Caco-2 (cell line): ENCODE measurements at regions of chr17 and their contacts with region 1.

Region 1: GRCh38 chr17:42720996-42721583 is 23.8 kb downstream of the EZH1 start:
- DNase-seq: peak in 1 of 2 experiments; percentile 76
- H3K4me3 ChIP-seq: no peak overlapping the region
- H3K4me3 Mint-ChIP-seq: no peak overlapping the region
- H3K27ac Mint-ChIP-seq: no peak overlapping the region
- H3K4me1 ChIP-seq: no peaks in the 10 kb centered on the region
- H3K4me1 Mint-ChIP-seq: no peaks in the 10 kb centered on the region
- H3K27me3 ChIP-seq: no peaks in the 10 kb centered on the region
- H3K27me3 Mint-ChIP-seq: no peaks in the 10 kb centered on the region
- CTCF ChIP-seq: peak; percentile 72 to 73

Region 2: DNA sequence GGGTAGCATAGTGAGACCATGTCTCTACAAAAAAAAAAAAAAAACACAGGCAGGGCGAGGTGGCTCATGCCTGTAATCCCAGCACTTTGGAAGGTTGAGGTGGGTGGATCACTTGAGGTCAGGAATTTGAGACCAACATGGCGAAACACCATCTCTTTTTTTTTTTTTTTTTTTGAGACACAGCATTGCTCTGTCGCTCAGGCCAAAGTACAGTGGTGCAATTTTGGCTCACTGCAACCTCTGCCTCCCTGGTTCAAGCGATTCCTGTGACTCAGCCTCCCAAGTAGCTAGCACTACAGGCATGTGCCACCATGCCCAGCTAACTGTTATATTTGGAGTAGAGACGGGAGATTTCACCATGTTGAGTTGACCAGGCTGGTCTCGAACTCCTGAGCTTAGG is 45.0 kb after region 1 on chr17:
- CTCF ChIA-PET with region 1: interaction called, 9 read pairs
- POLR2A ChIA-PET with region 1: interaction called, 15 read pairs
- intact Hi-C with region 1: loop called (anchors 1 kb)
- DNase-seq: peak in 1 of 2 experiments; percentile 23
- H3K4me3 ChIP-seq: no peak overlapping the region
- H3K4me3 Mint-ChIP-seq: no peak overlapping the region
- H3K27ac Mint-ChIP-seq: no peak overlapping the region
- H3K4me1 ChIP-seq: peaks cover 15% of the 10 kb centered on the region
- H3K4me1 Mint-ChIP-seq: peaks cover 13% of the 10 kb centered on the region
- H3K27me3 ChIP-seq: no peaks in the 10 kb centered on the region
- H3K27me3 Mint-ChIP-seq: no peaks in the 10 kb centered on the region
- CTCF ChIP-seq: no peak

Region 3: DNA sequence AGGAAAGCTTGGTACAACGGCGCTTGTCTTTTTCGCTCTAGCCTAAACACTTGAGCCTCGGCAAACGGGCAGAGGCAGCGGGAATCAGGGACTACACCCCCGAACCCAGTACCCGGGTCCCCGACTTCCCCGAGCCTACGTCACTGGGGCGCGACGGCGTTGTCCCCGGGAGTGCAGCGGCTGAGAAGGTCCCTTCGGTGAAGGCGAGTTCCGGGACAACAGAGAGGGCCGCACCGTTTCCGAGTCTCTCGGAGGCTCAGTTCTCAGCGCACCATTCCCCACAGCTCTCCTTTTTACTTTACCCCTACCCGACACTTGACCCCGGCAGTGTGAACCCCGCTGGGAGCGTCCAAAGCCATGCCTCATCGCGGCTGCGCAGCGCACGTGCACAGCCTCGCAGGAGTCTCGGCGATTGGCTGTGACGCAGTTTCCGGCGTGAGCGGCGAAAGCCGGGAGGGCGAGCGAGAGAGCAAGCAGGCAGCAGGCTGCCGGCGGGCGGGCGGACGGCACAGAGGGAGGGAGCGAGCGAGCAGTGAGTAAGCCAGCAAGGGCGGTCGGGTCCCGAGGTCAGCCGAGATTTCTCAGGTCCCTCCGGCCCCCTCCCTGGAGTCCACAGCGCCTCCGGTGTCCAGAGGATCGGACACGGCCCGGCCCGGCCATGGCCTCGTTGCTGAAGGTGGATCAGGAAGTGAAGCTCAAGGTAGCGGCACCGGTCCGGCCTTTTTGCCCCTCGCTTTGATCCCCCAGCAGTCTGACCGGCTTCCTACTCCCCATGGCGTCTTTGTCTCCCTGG is 112.1 kb after region 1 on chr17 and contains the start of gene PSME3:
- CTCF ChIA-PET with region 1: no interaction called
- POLR2A ChIA-PET with region 1: no interaction called
- intact Hi-C with region 1: no loop called
- DNase-seq: peak; percentile 91 to 92
- H3K4me3 ChIP-seq: peak within 1 kb of the TSS; percentile 97
- H3K4me3 Mint-ChIP-seq: peak within 1 kb of the TSS; percentile 91
- H3K27ac Mint-ChIP-seq: peak within 1 kb of the TSS; percentile 95
- H3K4me1 ChIP-seq: 0 out of 2 replicates have a peak, but pooled peaks cover 14% of the 10 kb centered on the region
- H3K4me1 Mint-ChIP-seq: no peaks in the 10 kb centered on the region
- H3K27me3 ChIP-seq: no peaks in the 10 kb centered on the region
- H3K27me3 Mint-ChIP-seq: no peaks in the 10 kb centered on the region
- CTCF ChIP-seq: no peak
- total RNA-seq, gene PSME3: 195 and 197 TPM in 2 replicates

Region 4: GRCh38 chr17:42937712-42938596 is 216.9 kb after region 1 on chr17:
- CTCF ChIA-PET with region 1: no interaction called
- POLR2A ChIA-PET with region 1: no interaction called
- intact Hi-C with region 1: loop called (anchors 1 kb)
- DNase-seq: peak; percentile 65 to 72
- H3K4me3 ChIP-seq: no peak overlapping the region
- H3K4me3 Mint-ChIP-seq: no peak overlapping the region
- H3K27ac Mint-ChIP-seq: no peak overlapping the region
- H3K4me1 ChIP-seq: no peaks in the 10 kb centered on the region
- H3K4me1 Mint-ChIP-seq: no peaks in the 10 kb centered on the region
- H3K27me3 ChIP-seq: no peaks in the 10 kb centered on the region
- H3K27me3 Mint-ChIP-seq: peaks cover 5% of the 10 kb centered on the region
- CTCF ChIP-seq: peak; percentile 75 to 81